B cell (primary cell): ENCODE measurements at regions of chr5 and their contacts with region 1.

Region 1: GRCh38 chr5:97009212-97009898 is 73.5 kb downstream of the LNPEP start:
- DNase-seq: peak; percentile 81
- ATAC-seq: peak; percentile 68
- H3K4me3 ChIP-seq: peak overlapping the region in 2 of 5 experiments; percentile 11 to 44
- H3K4me3 Mint-ChIP-seq: peak overlapping the region; percentile 69
- H3K27ac ChIP-seq: peak overlapping the region; percentile 65 to 88
- H3K27ac Mint-ChIP-seq: peak overlapping the region; percentile 81
- H3K4me1 ChIP-seq: peaks cover 16 to 23% of the 10 kb centered on the region in 2 donors
- H3K4me1 Mint-ChIP-seq: peaks cover 26% of the 10 kb centered on the region
- H3K27me3 ChIP-seq: no peaks in the 10 kb centered on the region
- H3K27me3 Mint-ChIP-seq: no peaks in the 10 kb centered on the region
- CTCF ChIP-seq: no peak

Region 2: DNA sequence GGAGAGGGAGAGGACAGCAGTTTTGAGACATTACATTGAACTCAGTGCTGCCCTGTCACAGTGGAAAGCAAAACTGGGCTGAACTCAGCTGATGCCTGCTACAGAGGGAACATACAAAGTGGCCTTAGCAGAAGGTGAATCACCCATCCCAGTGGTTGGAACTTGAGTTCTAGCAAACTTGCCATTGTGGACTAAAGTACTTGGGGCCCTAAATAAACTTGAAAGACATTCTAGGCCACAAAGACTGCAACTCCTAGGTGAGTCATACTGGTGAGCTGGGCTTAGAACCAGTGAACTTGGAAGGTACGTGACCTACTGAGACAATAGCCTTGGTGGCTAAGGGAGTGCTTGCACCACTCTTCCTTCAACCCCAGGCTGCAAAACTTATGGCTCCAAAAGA is 329.4 kb after region 1 on chr5:
- CTCF ChIA-PET with region 1: no interaction called
- POLR2A ChIA-PET with region 1: no interaction called
- intact Hi-C with region 1: no loop called
- DNase-seq: no peak
- ATAC-seq: no peak
- H3K4me3 ChIP-seq: no peak overlapping the region
- H3K4me3 Mint-ChIP-seq: no peak overlapping the region
- H3K27ac ChIP-seq: no peak overlapping the region
- H3K27ac Mint-ChIP-seq: no peak overlapping the region
- H3K4me1 ChIP-seq: no peaks in the 10 kb centered on the region
- H3K4me1 Mint-ChIP-seq: no peaks in the 10 kb centered on the region
- H3K27me3 ChIP-seq: no peaks in the 10 kb centered on the region
- H3K27me3 Mint-ChIP-seq: peaks cover 4% of the 10 kb centered on the region
- CTCF ChIP-seq: no peak

Region 3: GRCh38 chr5:98880151-98880550 is 1870.8 kb after region 1 on chr5:
- CTCF ChIA-PET with region 1: no interaction called
- POLR2A ChIA-PET with region 1: no interaction called
- intact Hi-C with region 1: loop called (anchors 5 kb)
- DNase-seq: no peak
- ATAC-seq: no peak
- H3K4me3 ChIP-seq: no peak overlapping the region
- H3K4me3 Mint-ChIP-seq: no peak overlapping the region
- H3K27ac ChIP-seq: no peak overlapping the region
- H3K27ac Mint-ChIP-seq: no peak overlapping the region
- H3K4me1 ChIP-seq: no peaks in the 10 kb centered on the region
- H3K4me1 Mint-ChIP-seq: no peaks in the 10 kb centered on the region
- H3K27me3 ChIP-seq: no peaks in the 10 kb centered on the region
- H3K27me3 Mint-ChIP-seq: no peaks in the 10 kb centered on the region
- CTCF ChIP-seq: no peak